ENCODE measurements at regions of chr1 and their contacts with region 1.

Region 1: DNA sequence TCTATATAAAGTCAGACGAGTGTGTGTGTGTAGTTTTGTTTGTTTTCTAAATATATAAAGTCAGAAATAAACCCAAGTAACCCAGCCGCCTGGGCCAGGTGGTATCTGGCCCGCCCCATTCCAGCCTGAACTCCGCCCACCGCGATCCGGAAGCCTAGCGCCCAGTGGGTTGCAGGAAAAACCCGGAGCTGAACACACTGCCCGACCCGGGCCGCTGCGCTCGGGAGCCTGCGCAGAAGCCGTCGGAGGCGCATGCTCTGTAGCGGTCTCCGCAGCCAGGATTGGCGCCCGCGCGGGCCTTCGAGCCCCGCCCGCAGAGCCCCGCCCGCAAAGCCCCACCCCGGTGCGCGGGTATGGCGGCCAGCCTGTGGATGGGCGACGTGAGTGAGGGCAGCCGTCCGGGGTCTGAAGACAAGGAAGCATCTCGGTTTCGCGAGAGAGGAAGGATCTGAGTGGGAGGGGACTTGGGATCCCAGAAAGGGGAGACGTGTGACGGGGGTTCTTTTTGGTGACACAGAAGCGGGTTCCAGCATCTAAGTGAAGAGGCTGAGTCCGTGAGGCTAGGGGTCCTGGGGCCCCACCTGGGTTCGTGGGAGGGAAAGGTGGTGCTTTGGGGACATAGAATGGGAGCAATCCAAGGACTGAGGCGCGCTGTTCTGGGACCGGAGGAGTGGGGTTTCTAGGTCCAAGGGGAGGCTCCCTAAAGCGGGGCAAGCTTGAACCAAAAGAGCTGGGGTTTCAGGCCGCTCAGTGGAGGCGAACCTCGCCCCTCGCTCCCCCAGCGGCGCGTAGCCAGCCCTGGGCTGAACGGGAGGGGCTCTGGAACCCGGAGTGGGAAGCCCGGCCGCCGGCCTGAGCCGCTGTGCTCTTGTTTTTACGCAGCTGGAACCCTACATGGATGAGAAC is at the start of gene TRNAU1AP:
- DNase-seq: peak; percentile 98
- H3K4me3 ChIP-seq: peak within 1 kb of the TSS; percentile 90
- H3K27ac ChIP-seq: peak within 1 kb of the TSS; percentile 82
- H3K4me1 ChIP-seq: peaks cover 24% of the 10 kb centered on the region
- CTCF ChIP-seq: no peak
- total RNA-seq, gene TRNAU1AP: 30.6 and 39.6 TPM in 2 replicates

Region 2: GRCh38 chr1:28581536-28582247 is 28.7 kb after region 1 on chr1:
- CTCF ChIA-PET with region 1: interaction called, 5 read pairs
- POLR2A ChIA-PET with region 1: interaction called, 22 read pairs
- intact Hi-C with region 1: loop called (anchors 1 kb)
- DNase-seq: peak; percentile 96
- H3K4me3 ChIP-seq: peak overlapping the region; percentile 97
- H3K27ac ChIP-seq: peak overlapping the region; percentile 85
- H3K4me1 ChIP-seq: peaks cover 38% of the 10 kb centered on the region
- CTCF ChIP-seq: 0 out of 2 replicates have a peak, but pooled peaks have one; percentile 41

Region 3: DNA sequence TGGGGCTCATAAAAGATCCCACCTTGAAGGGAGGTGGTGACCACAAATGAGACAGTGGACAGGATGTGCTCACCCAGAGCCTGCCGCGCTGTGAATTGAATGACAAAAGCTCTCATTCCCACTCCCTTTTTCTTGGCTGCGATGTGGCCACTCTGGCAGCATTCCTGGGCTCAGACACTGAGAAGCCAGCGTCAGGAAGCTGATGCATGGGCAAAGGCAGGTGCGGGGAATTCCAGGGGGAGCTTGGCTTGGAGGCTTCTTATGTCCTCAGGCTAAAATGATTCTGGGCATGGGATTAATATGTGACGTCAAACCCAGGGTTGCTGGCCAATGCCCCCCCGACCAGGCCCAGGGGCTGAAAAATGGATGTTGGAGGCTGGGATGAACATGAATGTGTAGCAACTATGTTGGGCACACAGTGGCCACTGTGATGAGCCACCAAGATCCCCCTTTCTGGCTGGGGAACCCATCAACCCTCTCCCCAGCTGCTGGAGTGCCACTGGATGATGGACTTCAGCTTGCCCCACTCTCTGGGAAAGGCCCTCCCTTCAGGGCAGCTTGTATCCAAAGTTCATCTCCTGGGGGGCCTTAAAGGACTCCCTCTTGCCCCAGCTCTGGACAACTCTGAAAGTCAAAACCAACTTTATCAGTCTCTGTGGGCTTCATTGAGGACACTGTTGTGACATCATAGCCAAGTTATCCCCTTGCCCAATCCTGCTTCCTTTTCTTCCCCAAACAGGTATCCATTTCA is 41.8 kb after region 1 on chr1:
- CTCF ChIA-PET with region 1: no interaction called
- POLR2A ChIA-PET with region 1: interaction called, 10 read pairs
- intact Hi-C with region 1: no loop called
- DNase-seq: no peak
- H3K4me3 ChIP-seq: no peak overlapping the region
- H3K27ac ChIP-seq: no peak overlapping the region
- H3K4me1 ChIP-seq: no peaks in the 10 kb centered on the region
- CTCF ChIP-seq: no peak

Measured in OCI-LY7 (cell line).